GM18951 (cell line): ENCODE measurements at regions of chr17 and their contacts with region 1.

Region 1: GRCh38 chr17:35537601-35538141 is at the start of gene SLFN12L:
- POLR2A ChIP-seq: peak; percentile 58

Region 2: GRCh38 chr17:35170968-35171771 is 366.5 kb before region 1 on chr17:
- in situ Hi-C with region 1: loop called (anchors 10 kb)
- POLR2A ChIP-seq: no peak

Region 3: GRCh38 chr17:35312790-35313711 is 224.6 kb before region 1 on chr17:
- in situ Hi-C with region 1: loop called (anchors 5 kb)
- POLR2A ChIP-seq: no peak

Region 4: GRCh38 chr17:35605678-35606077 is 68.0 kb after region 1 on chr17:
- in situ Hi-C with region 1: no loop called
- POLR2A ChIP-seq: no peak